Endothelial cell of umbilical vein (primary cell): ENCODE measurements at regions of chr4 and their contacts with region 1.

Region 1: GRCh38 chr4:16897991-16898827 is at the start of gene LDB2:
- DNase-seq: peak; percentile 88
- H3K4me3 ChIP-seq: peak within 1 kb of the TSS; percentile 66 to 97 (median 86)
- H3K27ac ChIP-seq: peak within 1 kb of the TSS; percentile 59
- H3K4me1 ChIP-seq: peaks cover 38% of the 10 kb centered on the region
- H3K27me3 ChIP-seq: no peaks in the 10 kb centered on the region
- CTCF ChIP-seq: no peak
- POLR2A ChIP-seq: no peak
- total RNA-seq, gene LDB2: 80.9 and 127 TPM in 2 replicates

Region 2: DNA sequence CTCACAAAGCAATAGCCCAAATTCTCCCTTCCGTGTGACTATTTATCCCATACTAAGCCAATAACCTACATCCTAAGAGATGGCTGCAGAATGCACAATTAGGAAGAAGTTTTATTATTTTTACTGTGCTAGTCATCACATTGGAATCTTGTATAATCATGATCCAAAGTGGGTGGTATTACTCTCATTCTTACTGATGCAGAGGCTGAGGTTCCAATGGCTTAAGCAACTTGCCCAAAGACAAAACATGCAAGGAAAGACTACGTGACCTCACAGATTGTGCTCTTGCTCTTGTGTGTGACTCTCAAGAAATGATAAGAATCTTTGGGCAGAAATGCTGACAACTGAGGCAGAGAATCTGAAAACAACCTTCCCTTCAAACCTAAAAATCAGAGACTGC is 212.0 kb before region 1 on chr4:
- CTCF ChIA-PET with region 1: no interaction called
- POLR2A ChIA-PET with region 1: no interaction called
- dilution Hi-C with region 1: no loop called
- intact Hi-C with region 1: loop called (anchors 10 kb)
- DNase-seq: peak; percentile 82
- H3K4me3 ChIP-seq: peak overlapping the region in 1 of 3 experiments; percentile 4
- H3K27ac ChIP-seq: peak overlapping the region; percentile 79
- H3K4me1 ChIP-seq: peaks cover 33% of the 10 kb centered on the region
- H3K27me3 ChIP-seq: no peaks in the 10 kb centered on the region
- CTCF ChIP-seq: no peak
- POLR2A ChIP-seq: no peak

Region 3: GRCh38 chr4:16820329-16820728 is 77.9 kb before region 1 on chr4:
- CTCF ChIA-PET with region 1: interaction called, 3 read pairs
- POLR2A ChIA-PET with region 1: interaction called, 3 read pairs
- dilution Hi-C with region 1: no loop called
- intact Hi-C with region 1: loop called (anchors 2 kb)
- DNase-seq: peak; percentile 94
- H3K4me3 ChIP-seq: peak overlapping the region in 1 of 3 experiments; percentile 57
- H3K27ac ChIP-seq: peak overlapping the region; percentile 85
- H3K4me1 ChIP-seq: peaks cover 25% of the 10 kb centered on the region
- H3K27me3 ChIP-seq: no peaks in the 10 kb centered on the region
- CTCF ChIP-seq: no peak
- POLR2A ChIP-seq: peak; percentile 50